ENCODE measurements at regions of chr19 and their contacts with region 1.

Region 1: GRCh38 chr19:46265217-46265828 is 31.5 kb upstream of the HIF3A start:
- DNase-seq: peak in 1 of 2 donors; percentile 51
- H3K4me3 ChIP-seq: no peak overlapping the region
- H3K27ac ChIP-seq: no peak overlapping the region
- H3K4me1 ChIP-seq: no peaks in the 10 kb centered on the region
- H3K27me3 ChIP-seq: peaks cover 0 to 47% of the 10 kb centered on the region in 2 donors
- CTCF ChIP-seq: peak; percentile 86 to 96

Region 2: DNA sequence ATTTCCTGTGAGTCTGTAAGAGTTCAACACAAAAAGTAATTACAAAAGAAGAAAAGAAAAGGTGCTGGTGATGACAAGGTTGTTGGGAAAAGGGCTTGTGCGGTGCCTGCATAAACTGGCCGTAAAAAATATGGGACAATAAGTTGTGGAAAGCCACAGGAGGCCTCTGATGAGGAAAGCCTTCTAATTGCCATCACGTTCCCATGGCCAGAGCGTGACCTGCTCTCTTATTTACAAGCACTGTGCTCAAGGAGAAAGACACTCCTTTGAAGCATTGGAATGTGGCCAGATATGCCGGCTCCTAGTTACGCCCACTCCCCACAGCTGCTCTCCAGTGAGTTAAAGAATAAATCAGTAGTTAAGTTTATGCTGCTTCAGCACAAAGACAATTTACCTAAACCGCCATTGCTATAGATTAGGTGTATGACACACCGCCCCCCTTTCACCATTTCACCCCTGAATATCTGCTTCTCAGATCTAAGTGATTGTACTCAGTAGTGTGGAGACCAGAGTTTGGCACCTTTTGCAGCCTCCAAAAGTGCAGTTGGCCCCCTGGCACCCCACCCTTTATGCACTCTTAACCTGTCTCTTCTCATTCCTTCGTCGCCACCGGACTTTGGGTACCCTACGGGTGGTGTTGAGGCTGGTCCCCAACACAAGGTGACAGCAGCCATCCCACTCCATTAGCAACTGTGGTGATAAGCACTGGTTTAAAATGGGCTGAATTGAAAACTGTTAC is 234.3 kb before region 1 on chr19:
- intact Hi-C with region 1: loop called (anchors 5 kb)
- DNase-seq: no peak
- H3K4me3 ChIP-seq: no peak overlapping the region
- H3K27ac ChIP-seq: no peak overlapping the region
- H3K4me1 ChIP-seq: no peaks in the 10 kb centered on the region
- H3K27me3 ChIP-seq: peaks cover 0 to 12% of the 10 kb centered on the region in 2 donors
- CTCF ChIP-seq: no peak

Region 3: DNA sequence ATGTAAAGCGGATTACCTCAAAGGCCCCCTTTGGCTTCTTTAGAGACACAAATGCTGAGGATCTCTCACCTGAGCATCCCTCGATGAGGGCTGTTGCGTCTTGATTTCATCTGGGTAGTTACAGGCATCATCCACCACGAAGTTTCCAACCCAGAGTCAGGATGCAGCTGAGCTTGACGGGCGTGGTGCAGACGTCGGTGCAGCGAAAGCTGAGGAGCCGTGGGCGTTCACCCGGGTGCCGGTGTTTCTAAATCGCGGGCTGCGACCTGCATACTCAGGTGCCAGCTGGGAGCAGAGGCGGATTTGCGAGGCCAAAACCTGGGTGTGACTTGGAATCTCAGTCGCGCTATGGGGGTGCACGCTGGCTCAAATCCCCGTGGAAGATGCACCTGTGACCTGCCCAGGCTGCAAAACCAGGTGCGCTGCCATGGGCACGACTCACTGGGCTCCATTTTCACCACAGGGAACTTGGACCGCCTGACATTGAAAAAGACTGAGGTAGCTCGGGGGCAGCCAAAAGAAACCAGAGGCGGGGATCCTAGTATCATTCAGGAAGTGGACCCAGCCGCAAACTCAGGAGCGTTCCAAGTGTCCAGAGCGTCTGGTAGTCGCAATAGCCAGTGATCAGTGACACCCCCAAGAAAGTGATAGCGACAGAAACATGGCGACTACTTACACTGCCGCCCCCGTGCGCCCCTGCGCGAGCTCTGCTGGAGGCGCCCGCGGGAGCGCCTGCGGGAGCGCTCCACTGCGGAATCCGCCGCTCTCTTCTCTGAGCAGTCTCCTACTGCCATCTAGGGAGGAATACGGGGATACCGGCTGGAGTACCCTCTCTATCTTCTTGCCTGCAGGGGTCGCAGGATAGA is 188.1 kb before region 1 on chr19:
- intact Hi-C with region 1: loop called (anchors 1 kb)
- DNase-seq: peak in 1 of 2 donors; percentile 21
- H3K4me3 ChIP-seq: peak overlapping the region in 1 of 2 donors; percentile 19
- H3K27ac ChIP-seq: no peak overlapping the region
- H3K4me1 ChIP-seq: peaks cover 0 to 10% (median 4%) of the 10 kb centered on the region in 4 donors
- H3K27me3 ChIP-seq: peaks cover 0 to 60% of the 10 kb centered on the region in 2 donors
- CTCF ChIP-seq: peak; percentile 38 to 41

Region 4: DNA sequence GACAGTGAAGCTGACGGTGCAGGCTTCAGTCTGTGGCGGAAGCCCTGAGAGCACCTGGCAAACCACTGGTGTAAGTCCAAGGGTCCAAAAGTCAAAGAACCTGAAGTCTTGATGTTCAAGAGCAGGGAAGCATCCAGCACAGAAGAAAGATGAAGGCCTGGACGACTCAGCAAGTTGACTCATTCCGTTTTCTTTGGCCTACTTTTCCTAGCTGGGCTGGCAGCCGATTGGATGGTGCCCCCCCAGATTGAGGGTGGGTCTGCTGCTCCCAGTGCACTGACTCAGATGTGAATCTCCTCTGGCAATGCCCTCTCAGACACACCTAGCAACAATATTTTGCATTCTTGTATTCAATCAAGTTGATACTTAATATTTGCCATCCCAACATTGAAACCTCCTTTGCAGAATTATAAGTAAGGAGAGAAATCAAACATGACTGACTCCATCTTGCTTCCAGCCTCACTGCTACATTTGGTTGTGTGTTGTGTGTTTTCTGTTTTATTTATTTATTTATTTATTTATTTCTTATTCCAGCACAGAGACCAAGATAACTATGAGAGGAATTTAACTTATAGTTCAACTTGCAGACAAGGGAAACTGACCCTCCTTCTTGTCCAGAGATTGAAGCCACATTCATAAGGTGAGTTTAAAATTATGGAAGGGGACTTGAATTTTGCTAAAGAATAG is 84.5 kb before region 1 on chr19:
- intact Hi-C with region 1: no loop called
- DNase-seq: peak in 1 of 2 donors; percentile 27
- H3K4me3 ChIP-seq: no peak overlapping the region
- H3K27ac ChIP-seq: no peak overlapping the region
- H3K4me1 ChIP-seq: no peaks in the 10 kb centered on the region
- H3K27me3 ChIP-seq: peaks cover 0 to 7% of the 10 kb centered on the region in 2 donors
- CTCF ChIP-seq: no peak

Region 5: DNA sequence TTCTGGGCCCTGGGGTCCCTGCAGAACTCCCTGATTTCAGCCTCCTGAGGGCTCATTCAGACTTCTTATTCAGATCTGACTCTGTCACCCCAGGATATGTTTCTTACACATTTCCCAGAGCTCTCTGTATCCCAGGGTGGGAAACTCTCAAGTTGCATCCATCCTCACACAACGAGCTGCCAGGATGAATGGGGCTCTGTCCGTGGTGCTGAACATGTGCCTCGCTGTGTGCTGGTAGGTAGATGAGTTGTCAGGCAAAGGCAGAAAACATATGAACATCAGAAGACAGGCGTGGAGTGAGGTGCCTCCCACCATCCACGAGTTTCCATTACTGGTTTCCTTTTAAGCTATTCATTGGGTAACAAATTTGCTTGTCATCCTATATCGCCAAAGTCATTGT is 47.2 kb before region 1 on chr19:
- intact Hi-C with region 1: no loop called
- DNase-seq: no peak
- H3K4me3 ChIP-seq: no peak overlapping the region
- H3K27ac ChIP-seq: no peak overlapping the region
- H3K4me1 ChIP-seq: peaks cover 0 to 15% (median 11%) of the 10 kb centered on the region in 4 donors
- H3K27me3 ChIP-seq: peaks cover 0 to 25% of the 10 kb centered on the region in 2 donors
- CTCF ChIP-seq: no peak

Measured in tibial artery (tissue), 4 donors.